ENCODE measurements at regions of chr3 and their contacts with region 1.

Region 1: DNA sequence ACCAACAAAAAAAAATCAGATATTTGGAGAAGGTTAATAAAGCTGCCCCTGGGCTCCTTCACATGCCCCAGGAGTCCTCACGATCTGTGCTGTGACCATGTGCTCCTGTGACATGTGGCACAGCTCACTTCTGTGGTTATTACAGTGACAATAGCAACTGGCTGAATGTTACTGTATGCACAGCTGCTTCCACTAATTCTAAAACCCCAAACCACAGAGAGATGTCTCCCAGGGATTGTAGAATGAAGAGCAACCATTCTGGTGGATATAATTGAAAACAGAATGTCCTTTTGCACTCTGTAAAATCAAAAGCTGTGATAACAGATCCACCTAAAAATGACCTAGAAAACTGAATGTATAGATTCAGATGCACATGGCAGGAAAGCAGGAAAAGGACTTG is 489.2 kb upstream of the CNTN4 start:
- DNase-seq: no peak

Region 2: GRCh38 chr3:514192-514591 is 1095.2 kb before region 1 on chr3:
- intact Hi-C with region 1: loop called in 1 of 2 experiments (anchors 10 kb)
- DNase-seq: no peak

Region 3: DNA sequence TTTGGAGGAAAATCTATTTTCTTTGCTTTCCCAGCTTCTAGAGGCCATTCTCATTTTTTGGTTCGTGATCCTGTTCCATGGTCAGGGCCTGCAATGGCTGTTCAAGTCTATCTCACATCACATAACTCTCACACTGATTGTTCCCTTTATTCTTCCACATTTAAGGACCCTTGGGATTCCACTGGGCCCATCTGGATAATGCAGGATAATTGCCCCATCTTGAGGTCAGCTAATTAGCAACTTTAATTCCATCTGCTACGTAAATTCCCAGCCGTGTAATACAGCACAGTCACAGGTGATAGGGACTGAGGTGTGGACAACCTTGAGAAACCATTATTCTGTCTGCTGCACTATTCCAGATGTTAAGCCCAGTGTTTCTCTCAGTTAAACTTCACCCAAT is 177.7 kb after region 1 on chr3:
- intact Hi-C with region 1: no loop called
- DNase-seq: no peak